Panc1 (cell line): ENCODE measurements at regions of chr15 and their contacts with region 1.

Region 1: GRCh38 chr15:63447017-63447676 is 57.2 kb upstream of the USP3 start:
- DNase-seq: no peak
- ATAC-seq: no peak
- H3K4me3 ChIP-seq: no peak overlapping the region
- H3K27ac ChIP-seq: no peak overlapping the region
- H3K4me1 ChIP-seq: no peaks in the 10 kb centered on the region
- H3K27me3 ChIP-seq: no peaks in the 10 kb centered on the region
- CTCF ChIP-seq: no peak

Region 2: GRCh38 chr15:63288778-63289378 is 158.3 kb before region 1 on chr15:
- CTCF ChIA-PET with region 1: interaction called, 13 read pairs
- POLR2A ChIA-PET with region 1: no interaction called
- in situ Hi-C with region 1: no loop called
- intact Hi-C with region 1: no loop called
- DNase-seq: no peak
- ATAC-seq: peak; percentile 90
- H3K4me3 ChIP-seq: no peak overlapping the region
- H3K27ac ChIP-seq: no peak overlapping the region
- H3K4me1 ChIP-seq: no peaks in the 10 kb centered on the region; the same call in 1 of the 2 replicates
- H3K27me3 ChIP-seq: no peaks in the 10 kb centered on the region
- CTCF ChIP-seq: peak; percentile 72; the same call in 1 of the 2 replicates

Region 3: GRCh38 chr15:63348392-63348791 is 98.8 kb before region 1 on chr15:
- CTCF ChIA-PET with region 1: no interaction called
- POLR2A ChIA-PET with region 1: no interaction called
- in situ Hi-C with region 1: no loop called
- intact Hi-C with region 1: no loop called
- DNase-seq: no peak
- ATAC-seq: no peak
- H3K4me3 ChIP-seq: no peak overlapping the region
- H3K27ac ChIP-seq: no peak overlapping the region
- H3K4me1 ChIP-seq: no peaks in the 10 kb centered on the region
- H3K27me3 ChIP-seq: peaks cover 4% of the 10 kb centered on the region; the same call in 1 of the 2 replicates
- CTCF ChIP-seq: no peak

Region 4: GRCh38 chr15:63420333-63420747 is 26.8 kb before region 1 on chr15:
- CTCF ChIA-PET with region 1: no interaction called
- POLR2A ChIA-PET with region 1: no interaction called
- in situ Hi-C with region 1: no loop called
- intact Hi-C with region 1: no loop called
- DNase-seq: no peak
- ATAC-seq: no peak
- H3K4me3 ChIP-seq: no peak overlapping the region
- H3K27ac ChIP-seq: no peak overlapping the region; the same call in 1 of the 2 replicates
- H3K4me1 ChIP-seq: no peaks in the 10 kb centered on the region
- H3K27me3 ChIP-seq: no peaks in the 10 kb centered on the region
- CTCF ChIP-seq: no peak

Region 5: GRCh38 chr15:63752075-63752684 is 305.0 kb after region 1 on chr15:
- CTCF ChIA-PET with region 1: no interaction called
- POLR2A ChIA-PET with region 1: no interaction called
- in situ Hi-C with region 1: no loop called
- intact Hi-C with region 1: no loop called
- DNase-seq: peak; percentile 51
- ATAC-seq: peak; percentile 84
- H3K4me3 ChIP-seq: no peak overlapping the region
- H3K27ac ChIP-seq: no peak overlapping the region
- H3K4me1 ChIP-seq: no peaks in the 10 kb centered on the region
- H3K27me3 ChIP-seq: no peaks in the 10 kb centered on the region
- CTCF ChIP-seq: peak; percentile 75; the same call in 1 of the 2 replicates

Region 6: DNA sequence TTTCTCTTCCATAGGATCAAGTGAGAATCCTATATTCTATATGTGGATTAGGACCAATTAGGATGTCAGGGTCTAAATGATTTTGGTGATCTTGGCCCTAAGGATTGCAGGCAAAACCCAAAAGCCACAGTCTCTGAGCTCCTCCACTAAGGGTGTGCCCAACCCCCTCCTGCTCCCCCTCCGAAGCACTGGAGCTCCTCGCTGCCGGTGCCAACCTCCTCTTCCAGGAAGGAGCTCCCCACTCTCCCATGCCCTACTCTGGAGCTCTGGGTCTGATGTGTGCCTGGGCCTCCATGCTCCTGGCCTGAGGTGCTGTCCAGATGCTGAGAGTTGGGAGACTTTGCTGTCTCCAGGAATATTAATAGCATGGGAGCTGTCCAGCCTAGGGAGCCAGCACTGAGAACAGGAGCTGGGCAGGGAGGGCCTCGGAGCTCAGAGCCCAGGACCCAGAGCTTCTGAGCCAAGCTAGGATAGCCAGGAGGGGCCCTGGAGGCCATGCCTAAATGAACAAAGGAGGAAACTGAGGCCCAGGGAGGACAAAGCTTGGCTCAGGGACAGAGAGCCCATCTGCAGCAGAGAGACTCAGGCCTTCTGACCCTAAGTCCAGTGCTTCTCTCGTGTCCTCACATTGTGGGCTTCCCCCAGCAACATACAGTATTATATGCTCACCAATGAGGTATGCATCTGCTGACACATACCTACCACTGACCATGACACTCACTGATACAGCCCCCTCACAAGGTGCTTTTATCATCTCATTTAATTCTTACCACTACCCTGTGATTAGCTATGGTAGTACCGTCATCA is 423.5 kb after region 1 on chr15:
- CTCF ChIA-PET with region 1: no interaction called
- POLR2A ChIA-PET with region 1: interaction called, 12 read pairs
- in situ Hi-C with region 1: no loop called
- intact Hi-C with region 1: no loop called
- DNase-seq: no peak
- ATAC-seq: peak; percentile 79
- H3K4me3 ChIP-seq: no peak overlapping the region
- H3K27ac ChIP-seq: no peak overlapping the region
- H3K4me1 ChIP-seq: no peaks in the 10 kb centered on the region
- H3K27me3 ChIP-seq: no peaks in the 10 kb centered on the region
- CTCF ChIP-seq: no peak